ENCODE measurements at regions of chr16 and their contacts with region 1.

Region 1: DNA sequence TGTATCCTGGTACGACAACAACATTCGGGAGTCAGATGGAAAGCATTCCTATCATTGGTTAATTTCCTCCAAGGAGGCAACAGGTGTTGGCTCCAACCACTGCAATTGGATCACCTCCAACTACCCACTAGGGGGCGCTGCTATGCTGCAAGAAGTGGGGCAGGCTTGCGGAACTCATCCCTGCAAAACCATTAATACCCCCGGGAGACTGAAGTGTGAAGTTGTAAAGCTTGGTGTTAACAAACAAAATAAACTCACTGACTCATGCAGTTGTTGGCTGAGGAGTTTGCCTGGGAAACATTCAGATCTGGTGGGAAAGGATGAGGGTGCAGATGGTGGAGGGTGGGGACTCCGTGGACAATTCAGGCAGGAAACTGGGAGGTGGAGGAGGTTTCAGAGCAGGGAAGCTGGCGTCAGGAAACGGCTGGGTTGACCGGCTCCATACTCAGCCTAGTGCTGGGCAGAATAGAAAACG is 84.9 kb downstream of the HS3ST2 start:
- DNase-seq: peak; percentile 68 to 93
- H3K4me3 ChIP-seq: no peak overlapping the region
- H3K27ac ChIP-seq: no peak overlapping the region
- H3K4me1 ChIP-seq: peaks cover 0 to 2% (median under 1%) of the 10 kb centered on the region in 4 experiments; a peak in 5 of 7 replicates
- H3K27me3 ChIP-seq: no peaks in the 10 kb centered on the region
- CTCF ChIP-seq: peak; percentile 88 to 96 (median 95)
- EP300 ChIP-seq: peak in 1 of 2 experiments; percentile 7; a peak in 1 of 3 replicates
- POLR2A ChIP-seq: no peak
- RAD21 ChIP-seq: peak; percentile 98 to 99

Region 2: GRCh38 chr16:22878955-22879354 is 20.0 kb before region 1 on chr16:
- CTCF ChIA-PET with region 1: interaction called, 42 read pairs
- POLR2A ChIA-PET with region 1: no interaction called
- DNase-seq: peak in 1 of 2 experiments; percentile 36
- H3K4me3 ChIP-seq: no peak overlapping the region
- H3K27ac ChIP-seq: no peak overlapping the region
- H3K4me1 ChIP-seq: peaks cover 0 to 2% (median 0%) of the 10 kb centered on the region in 4 experiments; a peak in 2 of 7 replicates
- H3K27me3 ChIP-seq: no peaks in the 10 kb centered on the region
- CTCF ChIP-seq: no peak
- EP300 ChIP-seq: no peak
- POLR2A ChIP-seq: no peak
- RAD21 ChIP-seq: no peak

Region 3: GRCh38 chr16:22924492-22924891 is 25.6 kb after region 1 on chr16:
- CTCF ChIA-PET with region 1: interaction called, 23 read pairs
- POLR2A ChIA-PET with region 1: interaction called, 3 read pairs
- DNase-seq: no peak
- H3K4me3 ChIP-seq: no peak overlapping the region
- H3K27ac ChIP-seq: no peak overlapping the region
- H3K4me1 ChIP-seq: no peaks in the 10 kb centered on the region
- H3K27me3 ChIP-seq: no peaks in the 10 kb centered on the region; a peak in 1 of 7 replicates
- CTCF ChIP-seq: no peak
- EP300 ChIP-seq: no peak
- POLR2A ChIP-seq: no peak
- RAD21 ChIP-seq: no peak

Region 4: GRCh38 chr16:22948603-22949368 is 49.9 kb after region 1 on chr16:
- CTCF ChIA-PET with region 1: interaction called, 110 read pairs
- POLR2A ChIA-PET with region 1: interaction called, 4 read pairs
- DNase-seq: peak; percentile 56 to 92
- H3K4me3 ChIP-seq: no peak overlapping the region
- H3K27ac ChIP-seq: no peak overlapping the region
- H3K4me1 ChIP-seq: peaks cover 0 to 8% (median 3%) of the 10 kb centered on the region in 4 experiments; a peak in 3 of 7 replicates
- H3K27me3 ChIP-seq: peaks cover 0 to 9% (median 3%) of the 10 kb centered on the region in 4 experiments; a peak in 4 of 7 replicates
- CTCF ChIP-seq: peak; percentile 73 to 99 (median 88)
- EP300 ChIP-seq: no peak
- POLR2A ChIP-seq: no peak
- RAD21 ChIP-seq: peak; percentile 82 to 84

Region 5: GRCh38 chr16:23005951-23006350 is 107.0 kb after region 1 on chr16:
- CTCF ChIA-PET with region 1: interaction called, 12 read pairs
- POLR2A ChIA-PET with region 1: no interaction called
- DNase-seq: no peak
- H3K4me3 ChIP-seq: no peak overlapping the region
- H3K27ac ChIP-seq: no peak overlapping the region
- H3K4me1 ChIP-seq: no peaks in the 10 kb centered on the region
- H3K27me3 ChIP-seq: no peaks in the 10 kb centered on the region
- CTCF ChIP-seq: no peak
- EP300 ChIP-seq: no peak
- POLR2A ChIP-seq: no peak
- RAD21 ChIP-seq: no peak

Region 6: GRCh38 chr16:23060458-23061320 is 161.8 kb after region 1 on chr16:
- CTCF ChIA-PET with region 1: interaction called, 19 read pairs
- POLR2A ChIA-PET with region 1: interaction called, 4 read pairs
- DNase-seq: peak; percentile 9 to 83
- H3K4me3 ChIP-seq: no peak overlapping the region
- H3K27ac ChIP-seq: no peak overlapping the region
- H3K4me1 ChIP-seq: peaks cover 0 to 13% (median 8%) of the 10 kb centered on the region in 4 experiments; a peak in 3 of 7 replicates
- H3K27me3 ChIP-seq: no peaks in the 10 kb centered on the region
- CTCF ChIP-seq: peak; percentile 49 to 79 (median 73)
- EP300 ChIP-seq: no peak
- POLR2A ChIP-seq: no peak
- RAD21 ChIP-seq: peak; percentile 83 to 88

Measured in H1 (cell line).